ENCODE measurements at regions of chr18 and their contacts with region 1.

Region 1: DNA sequence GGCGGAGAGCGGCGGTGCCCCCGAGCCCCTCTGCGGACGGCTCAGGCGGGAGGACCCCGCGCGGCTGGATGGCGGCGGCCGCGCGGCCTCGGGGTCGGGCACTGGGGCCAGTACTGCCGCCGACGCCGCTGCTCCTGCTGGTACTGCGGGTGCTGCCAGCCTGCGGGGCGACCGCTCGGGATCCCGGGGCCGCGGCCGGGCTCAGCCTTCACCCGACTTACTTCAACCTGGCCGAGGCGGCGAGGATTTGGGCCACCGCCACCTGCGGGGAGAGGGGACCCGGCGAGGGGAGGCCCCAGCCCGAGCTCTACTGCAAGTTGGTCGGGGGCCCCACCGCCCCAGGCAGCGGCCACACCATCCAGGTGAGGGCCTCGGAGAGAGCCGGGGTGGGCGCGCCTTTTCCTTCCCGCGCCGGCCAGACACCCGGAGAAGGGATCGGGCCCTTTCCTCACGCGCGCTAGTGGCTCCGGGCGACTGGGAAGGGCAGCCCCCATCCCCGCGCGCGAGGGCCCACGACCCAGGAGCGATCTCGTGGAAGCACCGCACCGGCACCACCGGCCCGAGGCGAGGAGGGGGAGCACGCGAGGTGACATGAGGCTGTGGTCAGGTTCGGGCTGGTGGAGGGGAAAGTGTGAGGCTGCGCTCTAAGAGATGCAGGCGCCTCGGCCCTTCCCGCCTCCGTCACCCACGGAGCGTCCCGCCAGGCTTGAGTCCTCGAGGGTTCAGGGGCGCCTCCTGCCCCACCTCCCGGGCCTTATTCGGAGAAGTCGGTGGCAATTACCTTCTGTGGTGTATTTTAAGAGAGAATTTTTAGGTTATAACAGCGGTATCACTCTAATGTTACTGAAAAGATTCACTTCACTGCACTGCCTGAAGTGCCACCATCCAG is 607 bp downstream of the LAMA3 start:
- DNase-seq: peak in 4 of 7 donors; percentile 7 to 28 (median 18)
- H3K4me3 ChIP-seq: peak overlapping the region in 2 of 4 donors; percentile 34 to 75
- H3K27ac ChIP-seq: no peak overlapping the region
- H3K4me1 ChIP-seq: peaks cover 6 to 15% of the 10 kb centered on the region in 2 donors
- H3K27me3 ChIP-seq: peaks cover 20% of the 10 kb centered on the region
- CTCF ChIP-seq: no peak
- POLR2A ChIP-seq: no peak

Region 2: DNA sequence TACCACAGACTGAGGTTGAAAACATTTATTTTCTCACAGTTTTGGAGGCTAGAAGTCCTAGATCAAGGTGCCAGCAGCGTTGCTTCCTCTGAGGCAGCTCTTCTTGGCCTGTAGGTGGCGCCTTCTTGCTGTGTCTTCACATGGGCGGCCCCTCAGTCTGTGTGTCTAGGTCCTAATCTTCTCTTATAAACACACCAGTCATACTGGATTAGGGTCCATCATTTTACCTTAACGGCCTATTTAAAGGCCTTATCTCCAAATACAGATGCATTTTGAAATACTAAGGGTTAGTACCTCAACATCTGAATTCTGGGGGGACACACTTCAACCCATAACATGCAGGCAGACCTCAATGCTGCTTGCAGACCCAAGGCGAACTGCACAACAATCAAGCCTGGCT is 191.0 kb before region 1 on chr18:
- intact Hi-C with region 1: loop called in 1 of 2 experiments (anchors 10 kb)
- DNase-seq: peak; percentile 55 to 87 (median 83)
- H3K4me3 ChIP-seq: no peak overlapping the region
- H3K27ac ChIP-seq: no peak overlapping the region
- H3K4me1 ChIP-seq: no peaks in the 10 kb centered on the region
- H3K27me3 ChIP-seq: no peaks in the 10 kb centered on the region
- CTCF ChIP-seq: peak; percentile 60 to 85 (median 73)
- POLR2A ChIP-seq: no peak

Region 3: GRCh38 chr18:23752796-23753195 is 62.9 kb after region 1 on chr18:
- intact Hi-C with region 1: no loop called
- DNase-seq: no peak
- H3K4me3 ChIP-seq: no peak overlapping the region
- H3K27ac ChIP-seq: no peak overlapping the region
- H3K4me1 ChIP-seq: no peaks in the 10 kb centered on the region
- H3K27me3 ChIP-seq: no peaks in the 10 kb centered on the region
- CTCF ChIP-seq: no peak
- POLR2A ChIP-seq: no peak